ENCODE measurements at regions of chr9 and their contacts with region 1.

Region 1: DNA sequence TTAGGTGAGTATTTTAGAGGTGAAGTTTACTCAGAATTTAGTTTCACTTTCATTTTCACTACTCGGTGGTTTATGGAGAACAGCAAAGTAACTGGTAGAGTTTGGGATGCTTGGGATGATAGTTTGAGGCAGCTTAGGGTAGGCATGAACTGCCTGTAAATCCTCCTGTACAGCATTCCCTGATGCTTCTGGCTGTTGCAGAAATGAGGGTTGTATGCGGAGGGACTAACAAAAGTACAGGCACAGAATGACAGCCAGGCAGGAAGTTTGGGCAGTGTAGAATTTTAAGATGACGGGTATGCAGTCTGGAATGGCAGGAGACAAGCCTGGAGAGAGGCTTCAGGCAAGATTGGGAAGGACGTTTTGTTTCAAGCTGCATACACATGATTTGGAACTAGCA is 48.0 kb upstream of the FAM120AOS start:
- DNase-seq: peak in 6 of 9 donors; percentile 8 to 37 (median 19)
- ATAC-seq: no peak
- H3K4me3 ChIP-seq: peak overlapping the region; percentile 51
- H3K4me3 Mint-ChIP-seq: peak overlapping the region; percentile 88 to 97 (median 91)
- H3K27ac ChIP-seq: peak overlapping the region; percentile 59
- H3K27ac Mint-ChIP-seq: peak overlapping the region; percentile 83 to 97 (median 91)
- H3K4me1 ChIP-seq: peaks cover 11 to 14% of the 10 kb centered on the region in 2 donors
- H3K4me1 Mint-ChIP-seq: peaks cover 33 to 73% (median 59%) of the 10 kb centered on the region in 7 donors
- H3K27me3 ChIP-seq: no peaks in the 10 kb centered on the region
- H3K27me3 Mint-ChIP-seq: no peaks in the 10 kb centered on the region

Region 2: DNA sequence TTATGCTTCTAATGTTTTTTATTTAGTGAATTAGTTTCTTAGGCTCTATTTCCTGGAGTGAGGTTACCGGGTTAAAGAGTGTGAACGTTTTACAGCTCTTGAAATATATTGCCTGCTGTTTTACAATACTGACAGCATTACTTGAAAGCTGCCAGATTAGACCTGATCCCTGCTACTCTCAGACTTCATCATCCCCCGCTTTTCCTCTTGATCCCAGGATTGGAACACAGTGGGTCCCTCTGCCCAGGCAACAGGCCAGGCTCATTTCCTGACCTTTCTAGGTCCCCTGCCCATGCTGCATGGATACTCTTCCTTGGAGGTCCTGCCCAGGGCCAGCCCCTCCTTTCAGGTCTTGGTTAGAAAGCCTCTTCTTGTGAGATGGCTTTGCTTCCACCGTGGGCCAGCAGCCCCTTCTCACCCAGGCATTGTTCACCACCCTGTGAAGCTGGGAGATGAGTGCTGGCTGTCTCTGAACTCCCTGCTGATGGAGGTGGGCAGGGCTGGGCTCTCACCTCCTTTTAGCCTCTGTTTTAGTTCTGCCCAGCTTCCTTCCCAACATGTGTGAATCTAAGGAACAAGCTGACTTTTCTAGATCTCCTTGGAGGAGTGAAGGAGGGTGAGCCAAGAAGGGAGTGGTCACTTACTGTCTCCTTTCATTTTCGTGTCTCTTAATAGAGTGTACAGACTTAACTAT is 32.5 kb before region 1 on chr9:
- CTCF ChIA-PET with region 1: no interaction called
- POLR2A ChIA-PET with region 1: no interaction called
- intact Hi-C with region 1: loop called (anchors 1 to 5 kb)
- DNase-seq: no peak
- ATAC-seq: no peak
- H3K4me3 ChIP-seq: no peak overlapping the region
- H3K4me3 Mint-ChIP-seq: peak overlapping the region in 7 of 10 donors; percentile 25 to 74 (median 60)
- H3K27ac ChIP-seq: no peak overlapping the region
- H3K27ac Mint-ChIP-seq: peak overlapping the region in 4 of 9 donors; percentile 7 to 66 (median 51)
- H3K4me1 ChIP-seq: peaks cover 29 to 40% of the 10 kb centered on the region in 2 donors
- H3K4me1 Mint-ChIP-seq: peaks cover 66 to 79% (median 72%) of the 10 kb centered on the region in 7 donors
- H3K27me3 ChIP-seq: no peaks in the 10 kb centered on the region
- H3K27me3 Mint-ChIP-seq: no peaks in the 10 kb centered on the region

Measured in naive thymus-derived CD4-positive, alpha-beta T cell (primary cell).